ENCODE measurements at regions of chr20 and their contacts with region 1.

Region 1: GRCh38 chr20:44038681-44039123 is 124.0 kb downstream of the TOX2 start:
- DNase-seq: peak in 1 of 2 donors; percentile 2
- H3K4me3 ChIP-seq: no peak overlapping the region
- H3K27ac ChIP-seq: no peak overlapping the region
- H3K4me1 ChIP-seq: no peaks in the 10 kb centered on the region
- H3K27me3 ChIP-seq: peaks cover 0 to 37% of the 10 kb centered on the region in 2 donors
- CTCF ChIP-seq: no peak
- POLR2A ChIP-seq: no peak

Region 2: GRCh38 chr20:44050925-44051660 is 12.4 kb after region 1 on chr20:
- intact Hi-C with region 1: loop called (anchors 1 kb)
- DNase-seq: peak in 1 of 2 donors; percentile 14
- H3K4me3 ChIP-seq: no peak overlapping the region
- H3K27ac ChIP-seq: no peak overlapping the region
- H3K4me1 ChIP-seq: no peaks in the 10 kb centered on the region
- H3K27me3 ChIP-seq: no peaks in the 10 kb centered on the region
- CTCF ChIP-seq: no peak
- POLR2A ChIP-seq: no peak

Measured in breast epithelium (tissue), 4 donors.